Endothelial cell of umbilical vein (primary cell): ENCODE measurements at regions of chr3 and their contacts with region 1.

Region 1: DNA sequence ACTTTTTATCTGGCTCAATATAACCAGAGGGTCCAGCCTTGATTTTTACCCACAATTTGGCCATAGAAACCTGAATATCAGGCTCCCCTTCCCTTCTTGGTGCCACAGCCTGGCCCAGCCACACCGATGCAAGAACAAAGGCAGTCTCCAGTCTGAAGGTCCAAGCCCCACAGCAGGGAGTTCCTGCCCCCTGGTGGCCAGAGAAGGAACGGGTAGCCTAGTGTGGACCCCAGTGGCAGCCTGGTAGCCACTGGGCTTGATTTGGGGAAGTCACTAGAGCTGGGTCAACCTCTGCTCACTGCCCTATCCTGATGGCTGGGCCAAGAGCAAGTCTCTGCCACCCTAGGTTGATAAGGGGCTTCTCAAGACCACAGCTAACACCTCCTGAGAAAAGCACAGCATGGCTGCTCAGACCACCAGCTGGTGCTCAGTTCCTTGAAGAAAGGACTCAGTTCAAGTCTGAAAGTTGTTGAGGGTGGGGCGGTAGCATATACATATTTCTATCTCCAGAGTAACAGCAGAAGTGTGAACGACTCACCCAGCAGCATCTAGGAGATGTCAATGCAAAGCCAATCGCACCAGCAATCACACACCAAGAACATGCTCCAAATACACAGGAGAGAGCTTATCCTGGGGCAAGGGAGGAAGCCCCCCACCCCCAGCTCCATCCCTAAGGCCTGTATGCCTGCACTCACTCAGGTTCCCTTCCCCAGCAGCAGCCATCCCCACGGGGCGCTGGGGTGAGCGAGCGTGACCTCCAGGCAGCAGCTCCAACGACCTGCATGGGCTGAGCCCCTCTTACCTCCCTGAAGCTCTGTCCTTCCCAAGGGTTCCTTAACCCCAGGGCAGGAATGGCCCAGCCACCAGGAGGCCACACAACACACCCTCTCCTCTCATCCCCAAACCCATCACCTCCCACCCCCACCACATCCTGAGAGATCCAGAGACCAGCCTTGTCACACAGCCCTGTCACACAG is 7.6 kb downstream of the PFKFB4 start:
- DNase-seq: peak; percentile 75
- H3K4me3 ChIP-seq: no peak overlapping the region
- H3K27ac ChIP-seq: no peak overlapping the region
- H3K4me1 ChIP-seq: no peaks in the 10 kb centered on the region
- H3K27me3 ChIP-seq: no peaks in the 10 kb centered on the region
- CTCF ChIP-seq: peak; percentile 94 to 97
- POLR2A ChIP-seq: no peak

Region 2: GRCh38 chr3:48232734-48233133 is 316.3 kb before region 1 on chr3:
- CTCF ChIA-PET with region 1: no interaction called
- POLR2A ChIA-PET with region 1: no interaction called
- dilution Hi-C with region 1: no loop called
- intact Hi-C with region 1: loop called (anchors 2 kb)
- DNase-seq: peak; percentile 69
- H3K4me3 ChIP-seq: no peak overlapping the region
- H3K27ac ChIP-seq: no peak overlapping the region
- H3K4me1 ChIP-seq: peaks cover 3% of the 10 kb centered on the region
- H3K27me3 ChIP-seq: no peaks in the 10 kb centered on the region
- CTCF ChIP-seq: peak; percentile 63 to 64
- POLR2A ChIP-seq: no peak

Region 3: GRCh38 chr3:48301020-48301796 is 247.8 kb before region 1 on chr3:
- CTCF ChIA-PET with region 1: no interaction called
- POLR2A ChIA-PET with region 1: no interaction called
- dilution Hi-C with region 1: no loop called
- intact Hi-C with region 1: no loop called
- DNase-seq: peak; percentile 88
- H3K4me3 ChIP-seq: peak within 1 kb of the TSS; percentile 57 to 86 (median 65)
- H3K27ac ChIP-seq: peak within 1 kb of the TSS; percentile 51
- H3K4me1 ChIP-seq: peaks cover 8% of the 10 kb centered on the region
- H3K27me3 ChIP-seq: peaks cover 2 to 5% of the 10 kb centered on the region in 2 experiments
- CTCF ChIP-seq: no peak
- POLR2A ChIP-seq: no peak

Region 4: GRCh38 chr3:48352547-48352946 is 196.5 kb before region 1 on chr3:
- CTCF ChIA-PET with region 1: no interaction called
- POLR2A ChIA-PET with region 1: no interaction called
- dilution Hi-C with region 1: no loop called
- intact Hi-C with region 1: no loop called
- DNase-seq: no peak
- H3K4me3 ChIP-seq: no peak overlapping the region
- H3K27ac ChIP-seq: no peak overlapping the region
- H3K4me1 ChIP-seq: no peaks in the 10 kb centered on the region
- H3K27me3 ChIP-seq: peaks cover 16 to 38% of the 10 kb centered on the region in 2 experiments
- CTCF ChIP-seq: no peak
- POLR2A ChIP-seq: no peak

Region 5: GRCh38 chr3:48400824-48401433 is 148.1 kb before region 1 on chr3:
- CTCF ChIA-PET with region 1: interaction called, 86 read pairs
- POLR2A ChIA-PET with region 1: no interaction called
- dilution Hi-C with region 1: no loop called
- intact Hi-C with region 1: loop called (anchors 1 kb)
- DNase-seq: peak; percentile 52
- H3K4me3 ChIP-seq: no peak overlapping the region
- H3K27ac ChIP-seq: no peak overlapping the region
- H3K4me1 ChIP-seq: peaks cover 10% of the 10 kb centered on the region
- H3K27me3 ChIP-seq: peaks cover 1% of the 10 kb centered on the region in 2 experiments
- CTCF ChIP-seq: peak; percentile 69 to 72
- POLR2A ChIP-seq: no peak

Region 6: DNA sequence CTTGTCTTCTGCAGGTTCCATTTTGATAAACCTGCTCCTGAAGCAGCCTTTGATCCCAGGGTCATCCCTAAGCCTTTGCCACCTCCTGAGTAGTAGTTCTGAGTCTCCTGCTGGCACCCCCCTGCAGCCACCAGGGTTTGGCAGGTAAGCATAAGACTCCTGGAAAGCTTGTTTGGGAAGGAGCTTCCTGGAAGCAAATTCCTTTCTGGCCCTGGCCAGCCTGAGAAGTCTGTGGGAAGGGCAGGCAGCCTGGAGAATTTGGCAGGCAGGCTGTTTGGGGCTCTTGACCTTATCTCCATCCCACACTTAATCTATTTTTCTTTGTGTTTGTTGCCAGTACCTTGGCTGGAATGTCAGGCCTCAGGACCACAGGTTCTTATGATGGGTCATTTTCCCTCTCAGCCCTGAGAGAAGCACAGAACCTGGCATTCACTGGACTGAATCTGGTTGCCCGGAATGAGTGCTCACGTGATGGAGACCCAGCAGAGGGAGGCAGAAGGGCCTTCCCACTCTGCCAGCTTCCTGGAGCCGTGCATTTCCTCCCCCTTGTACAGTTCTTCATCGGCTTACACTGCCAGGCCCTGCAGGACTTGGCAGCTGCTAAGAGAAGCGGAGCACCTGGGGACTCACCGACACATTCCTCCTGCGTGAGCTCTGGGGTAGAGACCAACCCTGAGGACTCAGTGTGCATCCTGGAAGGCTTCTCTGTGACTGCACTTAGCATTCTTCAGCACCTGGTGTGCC is 89.1 kb before region 1 on chr3:
- CTCF ChIA-PET with region 1: interaction called, 63 read pairs
- POLR2A ChIA-PET with region 1: interaction called, 3 read pairs
- dilution Hi-C with region 1: no loop called
- intact Hi-C with region 1: loop called (anchors 1 kb)
- DNase-seq: no peak
- H3K4me3 ChIP-seq: no peak overlapping the region
- H3K27ac ChIP-seq: no peak overlapping the region
- H3K4me1 ChIP-seq: peaks cover 1% of the 10 kb centered on the region
- H3K27me3 ChIP-seq: no peaks in the 10 kb centered on the region
- CTCF ChIP-seq: no peak
- POLR2A ChIP-seq: no peak

Region 7: GRCh38 chr3:48472915-48473616 is 76.0 kb before region 1 on chr3:
- CTCF ChIA-PET with region 1: interaction called, 63 read pairs
- POLR2A ChIA-PET with region 1: no interaction called
- dilution Hi-C with region 1: no loop called
- intact Hi-C with region 1: loop called (anchors 1 kb)
- DNase-seq: peak; percentile 90
- H3K4me3 ChIP-seq: peak overlapping the region; percentile 52 to 98 (median 98)
- H3K27ac ChIP-seq: peak overlapping the region; percentile 95
- H3K4me1 ChIP-seq: peaks cover 10% of the 10 kb centered on the region
- H3K27me3 ChIP-seq: no peaks in the 10 kb centered on the region
- CTCF ChIP-seq: peak; percentile 34 to 56
- POLR2A ChIP-seq: peak; percentile 91